GM12878 (cell line): ENCODE measurements at regions of chr3 and their contacts with region 1.

Region 1: GRCh38 chr3:129305592-129306091 is 27.0 kb downstream of the HMCES start:
- DNase-seq: no peak
- ATAC-seq: peak; percentile 64
- H3K4me3 ChIP-seq: no peak overlapping the region; the same call in 1 of the 2 replicates
- H3K27ac ChIP-seq: peak overlapping the region; percentile 33; the same call in 1 of the 2 replicates
- H3K4me1 ChIP-seq: peaks cover 17% of the 10 kb centered on the region
- H3K27me3 ChIP-seq: no peaks in the 10 kb centered on the region
- CTCF ChIP-seq: no peak
- EP300 ChIP-seq: no peak; a peak in 2 of 4 replicates
- POLR2A ChIP-seq: peak; percentile 56; the same call in 1 of the 2 replicates
- RAD21 ChIP-seq: no peak

Region 2: DNA sequence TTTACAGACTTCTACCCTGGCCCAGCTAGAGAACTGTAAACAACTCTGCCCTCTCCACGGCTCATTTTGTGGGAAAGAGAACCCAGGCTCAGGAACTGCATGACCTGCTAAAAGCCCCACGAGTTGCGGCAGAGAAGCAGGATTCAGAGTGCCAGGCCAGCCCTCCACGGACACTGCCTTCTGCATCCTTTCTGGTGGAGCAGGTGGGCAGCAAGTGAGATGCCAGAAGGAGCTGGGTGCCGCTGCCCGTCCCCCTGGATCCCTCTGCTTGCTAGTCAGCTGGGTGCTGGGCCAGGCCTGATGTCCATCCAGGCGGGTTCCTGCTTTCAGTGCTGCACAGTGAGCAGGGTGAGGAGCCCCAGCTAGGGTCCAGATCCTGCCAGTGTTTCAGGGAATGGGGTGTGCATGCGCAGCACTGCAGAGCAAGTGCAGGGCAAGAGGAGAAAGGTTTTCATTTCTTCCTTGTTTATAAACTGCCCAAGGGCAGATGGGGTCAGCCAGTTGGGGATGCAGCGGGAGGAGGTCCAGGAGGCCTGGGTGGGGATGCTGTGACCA is 178.8 kb before region 1 on chr3:
- CTCF ChIA-PET with region 1: no interaction called
- POLR2A ChIA-PET with region 1: no interaction called
- RAD21 ChIA-PET with region 1: no interaction called
- SMC1A ChIA-PET with region 1: no interaction called
- in situ Hi-C with region 1: no loop called
- intact Hi-C with region 1: no loop called
- DNase-seq: no peak
- ATAC-seq: no peak
- H3K4me3 ChIP-seq: no peak overlapping the region
- H3K27ac ChIP-seq: no peak overlapping the region
- H3K4me1 ChIP-seq: peaks cover 15% of the 10 kb centered on the region
- H3K27me3 ChIP-seq: no peaks in the 10 kb centered on the region
- CTCF ChIP-seq: no peak
- EP300 ChIP-seq: no peak
- POLR2A ChIP-seq: peak; percentile 40; the same call in 1 of the 2 replicates
- RAD21 ChIP-seq: no peak

Region 3: DNA sequence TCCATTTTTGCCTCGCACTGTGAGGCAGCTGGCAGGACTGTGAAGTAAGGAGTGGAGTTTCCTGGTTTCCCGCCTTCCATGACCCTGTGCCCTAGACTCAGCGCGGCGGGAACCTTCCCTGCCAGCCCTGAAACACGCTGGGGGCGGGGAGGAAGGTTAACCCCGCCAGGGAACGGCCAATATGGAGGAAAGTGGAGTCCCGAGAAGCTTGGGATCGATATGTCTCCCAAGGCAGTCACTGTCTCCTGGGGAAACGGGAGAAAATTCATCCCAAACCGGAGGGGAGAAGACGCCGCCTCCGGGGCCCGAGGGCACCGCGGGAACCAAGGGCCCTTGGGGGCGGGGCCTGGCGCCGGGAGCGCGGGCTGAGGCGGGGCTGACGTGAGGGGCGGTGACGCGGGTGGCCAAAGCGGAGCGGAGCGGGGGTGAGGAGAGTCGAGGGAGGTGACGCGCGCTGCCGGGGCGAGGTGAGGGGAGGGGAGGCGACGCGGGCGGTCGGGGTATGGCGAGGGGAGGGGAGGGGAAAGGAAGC is 27.1 kb before region 1 on chr3 and contains the start of gene HMCES:
- CTCF ChIA-PET with region 1: interaction called, 8 read pairs
- POLR2A ChIA-PET with region 1: interaction called, 13 read pairs
- RAD21 ChIA-PET with region 1: interaction called, 7 read pairs
- SMC1A ChIA-PET with region 1: interaction called, 75 read pairs
- in situ Hi-C with region 1: no loop called
- intact Hi-C with region 1: loop called (anchors 2 kb)
- DNase-seq: peak; percentile 31
- ATAC-seq: peak; percentile 75
- H3K4me3 ChIP-seq: peak within 1 kb of the TSS; percentile 76
- H3K27ac ChIP-seq: peak within 1 kb of the TSS; percentile 80
- H3K4me1 ChIP-seq: peaks cover 58% of the 10 kb centered on the region
- H3K27me3 ChIP-seq: no peaks in the 10 kb centered on the region
- CTCF ChIP-seq: no peak
- EP300 ChIP-seq: 0 out of 4 replicates have a peak, but pooled peaks of 1 of the 2 experiments have one; percentile 14
- POLR2A ChIP-seq: peak; percentile 88
- RAD21 ChIP-seq: no peak
- polyA plus RNA-seq, gene HMCES: 17.2 to 18.5 TPM